Heart left ventricle (tissue), 16 donors: ENCODE measurements at regions of chr18 and their contacts with region 1.

Region 1: GRCh38 chr18:59996370-59996966 is 96.7 kb downstream of the PMAIP1 start:
- DNase-seq: no peak
- ATAC-seq: no peak
- H3K4me3 ChIP-seq: no peak overlapping the region
- H3K27ac ChIP-seq: no peak overlapping the region
- H3K4me1 ChIP-seq: no peaks in the 10 kb centered on the region
- H3K27me3 ChIP-seq: peaks cover 0 to 28% (median 4%) of the 10 kb centered on the region in 9 donors
- CTCF ChIP-seq: peak in 6 of 12 donors; percentile 9 to 44 (median 32)
- POLR2A ChIP-seq: no peak

Region 2: GRCh38 chr18:59414111-59414653 is 582.3 kb before region 1 on chr18:
- intact Hi-C with region 1: no loop called
- DNase-seq: no peak
- ATAC-seq: no peak
- H3K4me3 ChIP-seq: no peak overlapping the region
- H3K27ac ChIP-seq: no peak overlapping the region
- H3K4me1 ChIP-seq: no peaks in the 10 kb centered on the region
- H3K27me3 ChIP-seq: peaks cover 0 to 14% (median 0%) of the 10 kb centered on the region in 9 donors
- CTCF ChIP-seq: no peak
- POLR2A ChIP-seq: no peak

Region 3: DNA sequence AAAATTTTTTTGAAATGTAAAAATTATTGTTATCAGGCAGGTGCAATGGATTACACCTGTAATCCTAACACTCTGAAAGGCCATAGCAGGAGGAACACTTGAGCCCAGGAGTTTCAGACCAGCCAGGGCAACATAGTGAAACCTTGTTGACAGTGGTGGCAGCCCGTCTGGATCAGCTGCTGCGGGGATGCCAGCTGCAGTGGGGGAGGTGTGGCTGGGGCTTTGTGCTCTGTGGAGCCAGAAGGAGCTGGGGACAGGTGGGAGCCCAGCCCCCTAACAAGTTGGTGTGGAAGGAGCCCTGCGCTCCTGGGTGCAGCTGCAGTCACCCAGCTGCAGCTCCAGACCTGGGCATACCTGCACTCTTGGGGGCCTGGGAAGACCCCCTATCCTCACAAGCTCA is 558.5 kb after region 1 on chr18:
- intact Hi-C with region 1: loop called in 1 of 10 experiments (anchors 5 kb)
- DNase-seq: no peak
- ATAC-seq: no peak
- H3K4me3 ChIP-seq: no peak overlapping the region
- H3K27ac ChIP-seq: no peak overlapping the region
- H3K4me1 ChIP-seq: no peaks in the 10 kb centered on the region
- H3K27me3 ChIP-seq: peaks cover 0 to 12% (median 0%) of the 10 kb centered on the region in 9 donors
- CTCF ChIP-seq: no peak
- POLR2A ChIP-seq: no peak